Heart right ventricle (tissue), 16 donors: ENCODE measurements at regions of chr3 and their contacts with region 1.

Region 1: DNA sequence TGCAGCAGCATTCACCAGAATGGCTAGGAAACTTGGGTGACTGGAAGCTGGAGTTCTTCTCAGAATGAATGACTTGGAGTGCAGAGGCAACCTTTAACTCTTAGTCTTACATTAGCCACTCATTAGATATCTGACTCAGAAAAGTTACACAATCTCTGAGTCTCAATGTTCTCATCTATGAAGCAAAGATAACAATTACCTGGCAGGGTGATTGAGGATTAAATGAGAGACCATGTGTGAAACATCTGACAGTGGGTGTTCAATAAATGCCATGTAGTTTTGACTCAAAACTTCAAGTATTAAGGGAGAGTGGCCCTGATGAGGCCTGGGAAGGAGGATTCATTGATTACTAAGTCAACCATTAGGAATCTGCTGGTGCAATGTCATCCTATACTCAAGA is 48.3 kb downstream of the MRPL3 start:
- DNase-seq: no peak
- ATAC-seq: peak in 1 of 8 donors; percentile 45
- H3K4me3 ChIP-seq: no peak overlapping the region
- H3K27ac ChIP-seq: no peak overlapping the region
- H3K4me1 ChIP-seq: peaks cover 0 to 18% (median 7%) of the 10 kb centered on the region in 9 donors
- H3K27me3 ChIP-seq: no peaks in the 10 kb centered on the region
- CTCF ChIP-seq: no peak

Region 2: GRCh38 chr3:131026321-131027178 is 428.0 kb before region 1 on chr3 and contains the starts of genes ASTE1 and NEK11:
- intact Hi-C with region 1: loop called in 1 of 10 experiments (anchors 10 kb)
- DNase-seq: peak; percentile 89 to 91
- ATAC-seq: peak; percentile 99 to 100 (median 99)
- H3K4me3 ChIP-seq: peak within 1 kb of the TSS; percentile 26 to 86 (median 75)
- H3K27ac ChIP-seq: peak within 1 kb of the TSS in 9 of 10 donors; percentile 62 to 94 (median 89)
- H3K4me1 ChIP-seq: peaks cover 0 to 51% (median 39%) of the 10 kb centered on the region in 9 donors
- H3K27me3 ChIP-seq: no peaks in the 10 kb centered on the region
- CTCF ChIP-seq: no peak
- total RNA-seq, gene ASTE1: 1.5 to 4.5 (median 3.5) TPM
- total RNA-seq, gene NEK11: 1.3 to 3.7 (median 2.1) TPM

Region 3: DNA sequence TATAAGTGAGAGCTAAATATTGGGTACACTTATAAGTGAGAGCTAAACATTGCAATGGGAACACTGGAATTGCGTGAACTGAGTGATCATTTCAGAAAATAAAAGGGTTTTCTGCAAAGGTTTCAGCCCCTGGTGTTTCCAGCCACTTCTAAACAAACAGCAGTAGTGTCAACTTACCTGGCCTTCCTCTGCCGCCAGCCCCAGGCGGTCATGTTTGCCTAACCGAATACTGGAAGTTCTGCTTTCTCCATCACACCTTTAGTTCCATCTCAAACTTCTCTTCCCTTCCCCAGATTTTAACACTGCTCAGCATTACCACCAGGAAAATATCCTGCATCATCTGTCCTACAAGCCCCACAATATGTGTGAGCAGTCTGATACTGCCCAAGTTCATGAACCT is 10.3 kb before region 1 on chr3:
- intact Hi-C with region 1: no loop called
- DNase-seq: no peak
- ATAC-seq: no peak
- H3K4me3 ChIP-seq: no peak overlapping the region
- H3K27ac ChIP-seq: no peak overlapping the region
- H3K4me1 ChIP-seq: peaks cover 0 to 8% (median 0%) of the 10 kb centered on the region in 9 donors
- H3K27me3 ChIP-seq: no peaks in the 10 kb centered on the region
- CTCF ChIP-seq: no peak